Caco-2 (cell line): ENCODE measurements at regions of chr5 and their contacts with region 1.

Region 1: GRCh38 chr5:165143741-165144140 is 1638.3 kb downstream of the MAT2B start:
- DNase-seq: no peak
- H3K4me3 ChIP-seq: no peak overlapping the region
- H3K4me3 Mint-ChIP-seq: no peak overlapping the region
- H3K27ac Mint-ChIP-seq: no peak overlapping the region
- H3K4me1 ChIP-seq: no peaks in the 10 kb centered on the region
- H3K4me1 Mint-ChIP-seq: no peaks in the 10 kb centered on the region
- H3K27me3 ChIP-seq: no peaks in the 10 kb centered on the region
- H3K27me3 Mint-ChIP-seq: peaks cover 3% of the 10 kb centered on the region
- CTCF ChIP-seq: no peak

Region 2: GRCh38 chr5:165086465-165086864 is 57.3 kb before region 1 on chr5:
- CTCF ChIA-PET with region 1: no interaction called
- POLR2A ChIA-PET with region 1: no interaction called
- intact Hi-C with region 1: no loop called
- DNase-seq: no peak
- H3K4me3 ChIP-seq: no peak overlapping the region
- H3K4me3 Mint-ChIP-seq: no peak overlapping the region
- H3K27ac Mint-ChIP-seq: no peak overlapping the region
- H3K4me1 ChIP-seq: no peaks in the 10 kb centered on the region
- H3K4me1 Mint-ChIP-seq: no peaks in the 10 kb centered on the region
- H3K27me3 ChIP-seq: no peaks in the 10 kb centered on the region
- H3K27me3 Mint-ChIP-seq: no peaks in the 10 kb centered on the region
- CTCF ChIP-seq: no peak

Region 3: GRCh38 chr5:165161204-165161603 is 17.5 kb after region 1 on chr5:
- CTCF ChIA-PET with region 1: no interaction called
- POLR2A ChIA-PET with region 1: no interaction called
- intact Hi-C with region 1: loop called (anchors 1 kb)
- DNase-seq: peak in 1 of 2 experiments; percentile 37
- H3K4me3 ChIP-seq: no peak overlapping the region
- H3K4me3 Mint-ChIP-seq: no peak overlapping the region
- H3K27ac Mint-ChIP-seq: no peak overlapping the region
- H3K4me1 ChIP-seq: no peaks in the 10 kb centered on the region
- H3K4me1 Mint-ChIP-seq: no peaks in the 10 kb centered on the region
- H3K27me3 ChIP-seq: no peaks in the 10 kb centered on the region
- H3K27me3 Mint-ChIP-seq: peaks cover 4% of the 10 kb centered on the region
- CTCF ChIP-seq: peak in 1 of 2 experiments; percentile 11

Region 4: DNA sequence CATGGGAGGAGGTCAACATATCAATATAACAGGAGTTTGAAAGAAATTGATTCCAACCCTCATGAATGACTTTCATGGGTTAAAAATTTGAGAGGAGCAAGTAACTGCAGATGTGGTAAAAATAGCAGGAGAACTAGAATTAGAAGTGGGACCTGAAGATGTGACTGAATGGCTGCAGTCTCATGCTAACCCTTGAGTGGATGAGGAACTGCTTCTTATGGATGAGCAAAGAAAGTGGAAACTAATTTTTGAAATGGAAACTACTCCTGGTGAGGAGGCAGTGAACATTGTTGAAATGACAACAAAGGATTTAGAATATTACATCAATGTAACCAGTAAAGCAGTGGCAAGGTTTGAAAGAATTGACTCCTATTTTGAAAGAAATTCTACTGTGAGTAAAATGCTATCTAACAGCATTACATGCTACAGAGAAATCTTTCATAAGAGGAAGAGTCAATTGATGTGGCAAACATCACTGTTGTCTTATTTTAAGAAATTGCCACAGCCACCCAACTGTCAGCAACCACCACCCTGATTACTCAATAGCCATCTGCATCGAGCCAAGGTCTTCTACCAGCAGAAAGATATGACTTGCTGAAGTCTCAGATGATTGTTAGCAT is 44.9 kb after region 1 on chr5:
- CTCF ChIA-PET with region 1: no interaction called
- POLR2A ChIA-PET with region 1: no interaction called
- intact Hi-C with region 1: no loop called
- DNase-seq: no peak
- H3K4me3 ChIP-seq: no peak overlapping the region
- H3K4me3 Mint-ChIP-seq: no peak overlapping the region
- H3K27ac Mint-ChIP-seq: no peak overlapping the region
- H3K4me1 ChIP-seq: no peaks in the 10 kb centered on the region
- H3K4me1 Mint-ChIP-seq: no peaks in the 10 kb centered on the region
- H3K27me3 ChIP-seq: no peaks in the 10 kb centered on the region
- H3K27me3 Mint-ChIP-seq: peaks cover 2% of the 10 kb centered on the region
- CTCF ChIP-seq: no peak